Activated CD4-positive, alpha-beta T cell treated with anti-CD3 and anti-CD28 coated beads for 36 hours (primary cell): ENCODE measurements at regions of chr2 and their contacts with region 1.

Region 1: DNA sequence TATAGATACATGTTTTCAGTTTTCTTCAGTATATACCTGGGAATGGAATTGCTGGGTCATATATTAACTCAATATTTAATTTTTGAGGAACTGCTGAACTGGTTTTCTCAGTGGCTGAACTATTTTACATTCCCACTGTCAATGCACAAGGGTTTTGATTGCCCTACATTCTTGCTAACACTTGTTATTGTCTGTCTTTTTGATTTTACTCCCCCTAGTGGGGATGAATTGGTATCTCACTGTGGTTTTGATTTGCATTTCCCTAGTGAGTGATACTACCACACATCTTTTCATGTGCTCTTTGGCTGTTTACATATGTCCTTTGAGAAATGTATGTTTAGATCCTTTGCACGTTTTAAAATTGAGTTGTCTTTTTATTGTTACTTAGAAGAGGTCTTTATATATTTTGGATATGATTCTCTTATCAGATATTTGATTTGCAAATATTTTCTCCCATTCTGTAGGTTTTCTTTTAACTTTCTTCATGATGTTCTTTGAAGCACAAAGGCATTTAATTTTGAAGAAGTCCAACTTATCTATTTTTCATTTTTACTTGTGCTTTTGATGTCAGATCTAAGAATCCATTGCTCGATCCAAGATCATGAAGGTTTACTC is 36.2 kb downstream of the ASB1 start:
- DNase-seq: no peak
- ATAC-seq: peak; percentile 79
- H3K4me3 Mint-ChIP-seq: no peak overlapping the region
- H3K27ac Mint-ChIP-seq: no peak overlapping the region
- H3K4me1 Mint-ChIP-seq: no peaks in the 10 kb centered on the region
- H3K27me3 Mint-ChIP-seq: no peaks in the 10 kb centered on the region

Region 2: DNA sequence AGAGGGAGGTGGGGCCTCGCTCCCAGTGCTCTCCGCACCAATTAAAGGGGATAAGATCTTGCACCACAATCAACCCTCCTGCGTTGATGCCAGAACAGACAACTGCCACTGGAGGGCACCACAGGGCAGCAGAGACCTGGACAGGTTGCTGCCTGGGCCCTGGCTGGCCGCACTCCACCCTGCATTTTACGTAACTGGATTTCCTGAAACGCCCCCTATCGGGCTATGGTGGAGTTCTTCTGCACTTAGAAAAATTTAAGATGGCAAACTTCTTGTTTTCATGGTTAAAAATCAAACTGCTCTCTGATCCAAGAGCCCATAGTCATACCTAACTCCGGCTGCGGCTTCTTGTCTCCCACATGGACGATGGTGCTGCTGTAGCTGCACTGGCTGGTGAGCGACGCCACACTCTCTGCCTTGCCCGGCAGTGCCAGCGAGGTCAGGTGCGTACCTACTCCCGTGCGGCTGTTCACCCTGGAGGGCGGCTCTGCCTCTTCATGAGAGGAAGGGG is 206.2 kb before region 1 on chr2:
- CTCF ChIA-PET with region 1: no interaction called
- POLR2A ChIA-PET with region 1: no interaction called
- intact Hi-C with region 1: loop called in 1 of 2 experiments (anchors 1 kb)
- DNase-seq: peak; percentile 87
- ATAC-seq: peak; percentile 98
- H3K4me3 Mint-ChIP-seq: no peak overlapping the region
- H3K27ac Mint-ChIP-seq: no peak overlapping the region
- H3K4me1 Mint-ChIP-seq: no peaks in the 10 kb centered on the region
- H3K27me3 Mint-ChIP-seq: no peaks in the 10 kb centered on the region

Region 3: DNA sequence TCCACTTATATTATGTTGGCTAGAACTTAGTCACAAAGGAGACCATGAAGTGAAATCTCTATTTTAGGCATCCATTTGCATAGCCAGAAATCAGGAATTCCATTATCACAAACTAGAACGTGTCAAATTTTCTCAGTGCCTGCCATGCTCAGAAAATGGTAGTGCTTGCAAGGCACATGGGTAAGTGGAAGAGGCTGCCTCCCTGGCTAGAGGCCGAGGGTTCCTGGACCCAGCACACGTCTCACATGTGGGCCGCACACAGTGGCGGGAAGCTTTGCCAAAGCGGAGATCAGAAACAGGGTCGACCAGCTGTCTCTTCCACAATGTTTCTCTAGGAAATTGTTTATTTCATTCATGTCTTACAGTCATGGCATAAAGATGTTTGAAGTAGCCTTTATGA is 100.3 kb before region 1 on chr2:
- CTCF ChIA-PET with region 1: interaction called, 10 read pairs
- POLR2A ChIA-PET with region 1: no interaction called
- intact Hi-C with region 1: loop called (anchors 1 to 5 kb)
- DNase-seq: no peak
- ATAC-seq: no peak
- H3K4me3 Mint-ChIP-seq: no peak overlapping the region
- H3K27ac Mint-ChIP-seq: no peak overlapping the region
- H3K4me1 Mint-ChIP-seq: no peaks in the 10 kb centered on the region
- H3K27me3 Mint-ChIP-seq: no peaks in the 10 kb centered on the region